B cell (primary cell): ENCODE measurements at regions of chr4 and their contacts with region 1.

Region 1: DNA sequence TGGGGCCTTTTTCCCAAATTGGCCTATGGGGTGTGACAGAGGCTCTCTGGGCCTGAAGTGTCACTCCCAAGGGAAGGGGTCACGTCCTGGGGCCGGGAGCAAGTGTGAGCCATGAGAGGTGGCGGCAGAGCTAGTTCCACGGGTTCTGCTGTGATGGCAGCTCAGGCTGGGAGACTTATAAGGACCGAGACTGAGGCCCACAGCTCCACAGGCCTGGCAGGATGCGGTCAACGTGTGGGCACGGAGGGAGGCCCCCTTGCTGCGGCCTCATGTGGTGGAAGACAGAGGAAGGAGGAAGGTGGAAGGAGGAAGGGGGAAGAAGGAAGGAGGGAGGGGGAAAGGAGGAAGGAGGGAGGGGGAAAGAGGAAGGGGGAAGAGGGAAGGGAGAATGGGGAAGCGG is 7.2 kb upstream of the CPLX1 start:
- DNase-seq: no peak
- ATAC-seq: no peak
- H3K4me3 ChIP-seq: no peak overlapping the region
- H3K4me3 Mint-ChIP-seq: no peak overlapping the region
- H3K27ac ChIP-seq: no peak overlapping the region
- H3K27ac Mint-ChIP-seq: no peak overlapping the region
- H3K4me1 ChIP-seq: peaks cover 0 to 5% of the 10 kb centered on the region in 2 donors
- H3K4me1 Mint-ChIP-seq: peaks cover 4% of the 10 kb centered on the region
- H3K27me3 ChIP-seq: peaks cover 0 to 24% (median 2%) of the 10 kb centered on the region in 4 experiments
- H3K27me3 Mint-ChIP-seq: peaks cover 8% of the 10 kb centered on the region
- CTCF ChIP-seq: no peak

Region 2: GRCh38 chr4:845233-845835 is 12.2 kb after region 1 on chr4:
- CTCF ChIA-PET with region 1: no interaction called
- POLR2A ChIA-PET with region 1: no interaction called
- intact Hi-C with region 1: no loop called
- DNase-seq: no peak
- ATAC-seq: no peak
- H3K4me3 ChIP-seq: no peak overlapping the region
- H3K4me3 Mint-ChIP-seq: no peak overlapping the region
- H3K27ac ChIP-seq: no peak overlapping the region
- H3K27ac Mint-ChIP-seq: no peak overlapping the region
- H3K4me1 ChIP-seq: no peaks in the 10 kb centered on the region
- H3K4me1 Mint-ChIP-seq: no peaks in the 10 kb centered on the region
- H3K27me3 ChIP-seq: no peaks in the 10 kb centered on the region
- H3K27me3 Mint-ChIP-seq: no peaks in the 10 kb centered on the region
- CTCF ChIP-seq: no peak

Region 3: DNA sequence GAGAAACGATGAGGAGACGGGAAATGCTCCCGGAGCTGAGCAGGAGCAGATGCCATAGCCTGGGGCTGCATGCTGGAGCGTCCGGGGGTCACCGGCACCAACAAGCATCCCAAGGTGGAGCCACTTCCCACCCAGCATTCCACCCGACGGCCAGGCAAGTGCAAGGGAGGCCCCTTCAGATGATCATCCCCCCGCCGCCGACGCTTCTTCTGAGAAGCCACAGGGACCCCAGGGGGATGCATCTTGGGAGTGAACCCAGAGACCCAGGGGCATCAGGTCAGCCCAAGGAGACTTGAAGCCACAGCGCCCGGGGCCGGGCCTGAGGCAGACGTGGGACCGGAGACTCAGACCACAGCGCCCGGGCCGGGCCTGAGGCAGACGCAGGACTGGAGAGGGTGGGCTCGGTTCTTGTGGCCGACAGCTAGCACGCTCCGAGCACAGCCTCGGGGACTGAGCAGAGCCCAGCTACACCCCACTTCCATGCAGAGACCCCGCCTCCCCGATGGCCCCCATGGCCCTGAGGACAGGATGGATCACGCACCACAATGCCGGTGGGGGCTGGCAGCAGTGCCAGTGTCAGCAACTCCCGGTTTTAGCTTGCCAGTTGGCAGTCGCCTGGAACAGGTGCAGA is 25.8 kb after region 1 on chr4:
- CTCF ChIA-PET with region 1: no interaction called
- POLR2A ChIA-PET with region 1: interaction called, 10 read pairs
- intact Hi-C with region 1: no loop called
- DNase-seq: no peak
- ATAC-seq: no peak
- H3K4me3 ChIP-seq: no peak overlapping the region
- H3K4me3 Mint-ChIP-seq: no peak overlapping the region
- H3K27ac ChIP-seq: no peak overlapping the region
- H3K27ac Mint-ChIP-seq: no peak overlapping the region
- H3K4me1 ChIP-seq: no peaks in the 10 kb centered on the region
- H3K4me1 Mint-ChIP-seq: no peaks in the 10 kb centered on the region
- H3K27me3 ChIP-seq: no peaks in the 10 kb centered on the region
- H3K27me3 Mint-ChIP-seq: no peaks in the 10 kb centered on the region
- CTCF ChIP-seq: no peak